Activated CD4-positive, alpha-beta T cell treated with anti-CD3 and anti-CD28 coated beads, Interleukin-2, amount 10 ng/mL, durations not matched to agents 24 days and 14 days (primary cell): ENCODE measurements at regions of chr14 and their contacts with region 1.

Region 1: GRCh38 chr14:67666750-67667449 is 7.5 kb downstream of the VTI1B start:
- DNase-seq: peak; percentile 81
- H3K4me3 Mint-ChIP-seq: no peak overlapping the region
- H3K27ac Mint-ChIP-seq: peak overlapping the region; percentile 22
- H3K4me1 Mint-ChIP-seq: peaks cover 32% of the 10 kb centered on the region
- H3K27me3 Mint-ChIP-seq: no peaks in the 10 kb centered on the region

Region 2: GRCh38 chr14:67426983-67427606 is 239.8 kb before region 1 on chr14:
- intact Hi-C with region 1: loop called (anchors 1 kb)
- DNase-seq: peak; percentile 91
- H3K4me3 Mint-ChIP-seq: no peak overlapping the region
- H3K27ac Mint-ChIP-seq: no peak overlapping the region
- H3K4me1 Mint-ChIP-seq: peaks cover 3% of the 10 kb centered on the region
- H3K27me3 Mint-ChIP-seq: peaks cover 27% of the 10 kb centered on the region

Region 3: GRCh38 chr14:67526676-67527459 is 140.0 kb before region 1 on chr14:
- intact Hi-C with region 1: loop called (anchors 2 kb)
- DNase-seq: peak; percentile 82
- H3K4me3 Mint-ChIP-seq: no peak overlapping the region
- H3K27ac Mint-ChIP-seq: no peak overlapping the region
- H3K4me1 Mint-ChIP-seq: no peaks in the 10 kb centered on the region
- H3K27me3 Mint-ChIP-seq: peaks cover 56% of the 10 kb centered on the region

Region 4: GRCh38 chr14:67583711-67584644 is 82.9 kb before region 1 on chr14:
- intact Hi-C with region 1: loop called (anchors 2 kb)
- DNase-seq: peak; percentile 77
- H3K4me3 Mint-ChIP-seq: no peak overlapping the region
- H3K27ac Mint-ChIP-seq: no peak overlapping the region
- H3K4me1 Mint-ChIP-seq: peaks cover 3% of the 10 kb centered on the region
- H3K27me3 Mint-ChIP-seq: no peaks in the 10 kb centered on the region

Region 5: DNA sequence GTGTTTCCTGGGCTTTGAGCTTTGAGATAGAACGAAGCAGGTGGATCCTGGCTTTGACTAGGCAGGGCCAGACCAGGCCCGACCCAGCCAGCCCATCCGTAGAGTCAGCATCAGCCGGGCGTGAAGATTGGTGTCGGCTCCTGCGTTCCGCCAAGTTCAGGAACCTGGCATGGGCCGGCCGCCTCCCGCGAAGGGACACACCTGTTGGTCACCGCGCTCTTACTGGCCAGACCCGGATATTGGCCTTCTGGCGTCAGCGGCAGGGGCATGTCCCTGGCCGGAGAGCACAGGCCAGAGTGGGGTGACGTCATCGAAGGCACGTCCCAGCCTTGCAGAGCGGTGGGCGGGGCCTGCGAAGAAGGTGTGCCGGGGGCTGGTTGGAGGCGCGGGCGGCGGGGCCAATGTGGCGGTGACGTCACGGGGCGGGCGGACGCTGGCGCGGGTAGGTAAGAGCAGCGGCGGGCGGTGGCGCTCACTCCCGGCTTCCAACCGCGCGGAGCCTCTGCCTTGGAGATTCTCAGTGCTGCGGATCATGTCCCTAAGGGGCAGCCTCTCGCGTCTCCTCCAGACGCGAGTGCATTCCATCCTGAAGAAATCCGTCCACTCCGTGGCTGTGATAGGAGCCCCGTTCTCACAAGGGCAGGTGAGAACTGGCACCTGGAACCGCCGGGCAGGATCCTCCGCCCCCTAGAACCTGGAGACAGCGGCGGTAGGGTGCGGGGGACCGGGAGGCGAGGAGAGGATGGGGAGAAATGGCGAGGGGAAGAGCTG is 47.3 kb before region 1 on chr14 and contains the start of gene ARG2:
- intact Hi-C with region 1: loop called (anchors 1 kb)
- DNase-seq: peak; percentile 99
- H3K4me3 Mint-ChIP-seq: peak within 1 kb of the TSS; percentile 92
- H3K27ac Mint-ChIP-seq: peak within 1 kb of the TSS; percentile 85
- H3K4me1 Mint-ChIP-seq: peaks cover 33% of the 10 kb centered on the region
- H3K27me3 Mint-ChIP-seq: peaks cover 15% of the 10 kb centered on the region
- total RNA-seq, gene ARG2: 4.7 and 5.0 TPM in 2 replicates

Region 6: GRCh38 chr14:68444449-68445168 is 777.7 kb after region 1 on chr14:
- intact Hi-C with region 1: no loop called
- DNase-seq: peak; percentile 45
- H3K4me3 Mint-ChIP-seq: no peak overlapping the region
- H3K27ac Mint-ChIP-seq: no peak overlapping the region
- H3K4me1 Mint-ChIP-seq: no peaks in the 10 kb centered on the region
- H3K27me3 Mint-ChIP-seq: no peaks in the 10 kb centered on the region

Region 7: DNA sequence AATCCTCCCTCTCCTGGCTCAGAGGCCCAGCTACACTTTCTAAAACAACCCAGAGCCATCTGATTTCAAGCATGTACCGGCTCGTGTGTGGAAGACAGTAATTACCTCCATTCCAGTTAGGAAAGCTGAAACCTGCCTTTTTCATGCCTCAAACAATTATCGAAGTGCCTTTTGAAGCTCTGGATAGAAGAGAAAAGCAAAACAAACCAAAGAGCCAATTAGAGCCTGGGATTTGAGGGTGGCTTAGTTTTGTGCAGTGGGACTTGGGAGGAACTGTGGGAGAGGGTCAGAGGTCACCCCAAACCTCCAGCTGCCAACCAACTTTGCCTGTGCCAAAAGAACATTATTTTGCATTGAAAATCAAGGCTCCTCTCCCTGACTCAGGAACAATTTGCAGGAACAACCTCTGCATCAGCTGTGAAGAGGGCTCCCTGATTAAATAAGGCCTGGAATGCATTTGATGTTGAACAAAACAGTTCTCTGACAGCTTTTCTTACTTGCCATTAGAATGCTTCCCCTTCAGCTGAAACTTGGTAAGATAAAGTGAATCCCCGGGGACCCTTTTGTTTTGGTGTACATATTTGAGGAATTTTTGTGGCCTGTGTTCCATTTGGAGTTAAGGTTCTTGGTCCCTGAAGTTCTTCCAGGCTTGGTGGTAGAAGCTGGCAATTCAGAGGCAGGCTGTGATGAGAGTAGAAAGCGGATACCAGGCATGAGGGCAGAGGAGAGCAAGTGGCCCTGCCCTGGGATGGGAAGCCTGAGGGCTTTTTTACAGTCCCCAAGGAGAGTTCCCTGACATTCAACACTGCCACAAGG is 855.8 kb after region 1 on chr14:
- intact Hi-C with region 1: no loop called
- DNase-seq: no peak
- H3K4me3 Mint-ChIP-seq: no peak overlapping the region
- H3K27ac Mint-ChIP-seq: no peak overlapping the region
- H3K4me1 Mint-ChIP-seq: peaks cover 3% of the 10 kb centered on the region
- H3K27me3 Mint-ChIP-seq: peaks cover 1% of the 10 kb centered on the region